Tibial artery (tissue), 4 donors: ENCODE measurements at regions of chr3 and their contacts with region 1.

Region 1: GRCh38 chr3:51501833-51502561 is 2.2 kb upstream of the DCAF1 start:
- DNase-seq: peak; percentile 74 to 85
- H3K4me3 ChIP-seq: no peak overlapping the region
- H3K27ac ChIP-seq: peak overlapping the region in 1 of 2 donors; percentile 11
- H3K4me1 ChIP-seq: peaks cover 0 to 10% (median 5%) of the 10 kb centered on the region in 4 donors
- H3K27me3 ChIP-seq: peaks cover 0 to 4% of the 10 kb centered on the region in 2 donors
- CTCF ChIP-seq: peak; percentile 93 to 94

Region 2: GRCh38 chr3:51353691-51354090 is 148.3 kb before region 1 on chr3:
- intact Hi-C with region 1: no loop called
- DNase-seq: no peak
- H3K4me3 ChIP-seq: no peak overlapping the region
- H3K27ac ChIP-seq: no peak overlapping the region
- H3K4me1 ChIP-seq: no peaks in the 10 kb centered on the region
- H3K27me3 ChIP-seq: no peaks in the 10 kb centered on the region
- CTCF ChIP-seq: no peak

Region 3: DNA sequence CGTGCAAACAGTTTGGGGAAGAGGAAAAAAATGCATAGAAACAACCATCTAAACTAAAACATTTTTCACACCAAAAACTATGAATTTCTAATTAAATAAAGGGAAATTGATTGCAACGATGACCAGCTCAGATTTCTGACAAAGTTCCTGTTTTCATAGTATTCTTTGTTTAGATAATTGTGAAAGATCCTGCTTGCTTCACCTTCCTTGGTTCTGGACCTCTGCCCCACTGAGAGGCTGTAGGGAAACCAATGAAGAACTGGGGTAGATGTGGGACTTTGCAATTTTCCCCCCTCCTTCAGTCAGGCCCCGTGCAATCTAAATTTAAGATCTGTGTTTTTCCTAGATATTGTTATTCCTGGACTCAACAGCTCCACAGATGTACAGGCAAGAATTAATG is 155.2 kb after region 1 on chr3:
- intact Hi-C with region 1: no loop called
- DNase-seq: no peak
- H3K4me3 ChIP-seq: no peak overlapping the region
- H3K27ac ChIP-seq: no peak overlapping the region
- H3K4me1 ChIP-seq: no peaks in the 10 kb centered on the region
- H3K27me3 ChIP-seq: no peaks in the 10 kb centered on the region
- CTCF ChIP-seq: no peak

Region 4: GRCh38 chr3:51799879-51800749 is 298.1 kb after region 1 on chr3:
- intact Hi-C with region 1: loop called (anchors 10 kb)
- DNase-seq: no peak
- H3K4me3 ChIP-seq: no peak overlapping the region
- H3K27ac ChIP-seq: no peak overlapping the region
- H3K4me1 ChIP-seq: peaks cover 0 to 3% (median 0%) of the 10 kb centered on the region in 4 donors
- H3K27me3 ChIP-seq: peaks cover 0 to 11% of the 10 kb centered on the region in 2 donors
- CTCF ChIP-seq: peak; percentile 54 to 68